K562 (cell line): ENCODE measurements at regions of chr4 and their contacts with region 1.

Region 1: GRCh38 chr4:55345980-55346850 is at the start of gene SRD5A3:
- DNase-seq: peak; percentile 89 to 93 (median 90)
- ATAC-seq: peak; percentile 94
- H3K4me3 ChIP-seq: peak within 1 kb of the TSS; percentile 62
- H3K27ac ChIP-seq: peak within 1 kb of the TSS; percentile 96
- H3K4me1 ChIP-seq: peaks cover 12 to 15% of the 10 kb centered on the region in 2 experiments
- H3K27me3 ChIP-seq: no peaks in the 10 kb centered on the region
- CTCF ChIP-seq: peak; percentile 81 to 91 (median 83)
- EP300 ChIP-seq: no peak; the same call in 1 of the 2 replicates
- POLR2A ChIP-seq: peak; percentile 88
- RAD21 ChIP-seq: peak; percentile 71 to 73
- polyA plus RNA-seq, gene SRD5A3: 2.5 to 5.3 TPM

Region 2: DNA sequence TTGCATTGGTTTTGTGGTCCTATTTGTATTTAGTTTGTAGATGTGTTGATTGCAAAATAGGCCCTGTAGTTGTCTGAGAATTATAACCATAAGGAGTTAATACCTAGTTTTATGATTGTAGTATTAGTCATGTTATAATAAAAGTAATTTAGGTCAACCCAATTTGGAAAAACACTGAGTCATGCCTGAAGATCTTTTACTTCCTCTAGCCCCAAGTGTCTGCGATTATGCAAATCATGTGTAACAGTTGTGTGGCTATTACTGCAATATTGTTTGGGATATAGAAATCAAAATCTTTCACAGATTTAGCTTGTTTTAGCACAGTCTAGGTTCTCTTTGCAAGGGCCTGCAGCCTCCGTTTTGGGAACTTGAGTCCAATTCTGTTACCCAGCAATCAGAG is 12.5 kb after region 1 on chr4:
- CTCF ChIA-PET with region 1: no interaction called
- POLR2A ChIA-PET with region 1: interaction called, 11 read pairs
- in situ Hi-C with region 1: no loop called
- intact Hi-C with region 1: no loop called
- DNase-seq: peak in 2 of 4 experiments; percentile 41 to 44
- ATAC-seq: peak; percentile 31
- H3K4me3 ChIP-seq: no peak overlapping the region
- H3K27ac ChIP-seq: peak overlapping the region; percentile 17; the same call in 1 of the 3 replicates
- H3K4me1 ChIP-seq: peaks cover 4 to 18% of the 10 kb centered on the region in 2 experiments; a peak in 4 of 5 replicates
- H3K27me3 ChIP-seq: no peaks in the 10 kb centered on the region
- CTCF ChIP-seq: no peak
- EP300 ChIP-seq: peak; percentile 41; the same call in 1 of the 2 replicates
- POLR2A ChIP-seq: no peak
- RAD21 ChIP-seq: no peak

Region 3: DNA sequence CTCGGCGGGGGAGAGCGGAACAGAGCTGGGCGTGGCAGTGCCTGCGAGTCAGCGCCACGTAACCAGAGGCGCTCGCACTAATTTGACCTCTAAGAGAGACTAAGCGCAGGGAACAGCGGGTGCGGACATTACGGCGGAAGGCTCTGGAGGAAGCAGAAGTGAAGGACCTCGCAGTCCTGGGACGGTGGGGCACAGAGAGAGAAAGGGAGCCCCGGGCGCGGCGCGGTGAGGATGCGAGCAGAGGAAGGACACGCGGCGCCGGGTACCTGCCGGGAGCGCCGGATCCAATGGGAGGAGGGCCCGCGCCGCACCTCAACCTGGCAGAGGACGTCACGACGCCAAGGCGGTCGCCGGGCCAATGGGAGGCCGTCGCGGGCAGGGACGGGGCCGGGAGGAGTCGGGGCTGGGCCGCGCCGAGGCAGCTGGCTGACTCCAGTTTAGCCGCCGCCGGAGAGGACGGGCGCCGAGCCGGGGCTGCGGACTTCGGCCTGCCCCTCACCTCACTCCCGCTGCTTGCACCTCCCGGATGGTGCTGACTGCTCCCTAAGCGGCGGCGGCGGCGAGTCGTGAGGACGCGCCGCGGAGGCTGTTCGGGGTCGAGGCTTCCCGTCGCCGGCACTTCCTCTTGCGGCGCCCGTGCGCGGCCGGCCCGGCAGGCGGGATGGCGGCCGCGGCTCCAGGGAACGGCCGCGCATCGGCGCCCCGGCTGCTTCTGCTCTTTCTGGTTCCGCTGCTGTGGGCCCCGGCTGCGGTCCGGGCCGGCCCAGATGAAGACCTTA is 49.5 kb after region 1 on chr4 and contains the start of gene TMEM165:
- CTCF ChIA-PET with region 1: no interaction called
- POLR2A ChIA-PET with region 1: interaction called, 8 read pairs
- in situ Hi-C with region 1: no loop called
- intact Hi-C with region 1: loop called (anchors 1 kb)
- DNase-seq: peak; percentile 94 to 96 (median 96)
- ATAC-seq: peak; percentile 92
- H3K4me3 ChIP-seq: peak within 1 kb of the TSS; percentile 97
- H3K27ac ChIP-seq: peak within 1 kb of the TSS; percentile 90
- H3K4me1 ChIP-seq: peaks cover 16 to 26% of the 10 kb centered on the region in 2 experiments; a peak in 4 of 5 replicates
- H3K27me3 ChIP-seq: no peaks in the 10 kb centered on the region
- CTCF ChIP-seq: 0 out of 6 replicates have a peak, but pooled peaks of 1 of the 3 experiments have one; percentile 4
- EP300 ChIP-seq: no peak
- POLR2A ChIP-seq: peak; percentile 91
- RAD21 ChIP-seq: no peak
- polyA plus RNA-seq, gene TMEM165: 21.3 to 27.5 TPM

Region 4: GRCh38 chr4:55431710-55432336 is 85.6 kb after region 1 on chr4:
- CTCF ChIA-PET with region 1: no interaction called
- POLR2A ChIA-PET with region 1: no interaction called
- in situ Hi-C with region 1: no loop called
- intact Hi-C with region 1: no loop called
- DNase-seq: no peak
- ATAC-seq: no peak
- H3K4me3 ChIP-seq: no peak overlapping the region
- H3K27ac ChIP-seq: no peak overlapping the region
- H3K4me1 ChIP-seq: peaks cover 0 to under 1% of the 10 kb centered on the region in 2 experiments; a peak in 3 of 5 replicates
- H3K27me3 ChIP-seq: no peaks in the 10 kb centered on the region
- CTCF ChIP-seq: no peak
- EP300 ChIP-seq: no peak
- POLR2A ChIP-seq: no peak
- RAD21 ChIP-seq: no peak

Region 5: GRCh38 chr4:55546756-55547465 is 200.7 kb after region 1 on chr4 and contains the start of gene CLOCK:
- CTCF ChIA-PET with region 1: interaction called, 4 read pairs
- POLR2A ChIA-PET with region 1: no interaction called
- in situ Hi-C with region 1: loop called (anchors 10 kb)
- intact Hi-C with region 1: loop called (anchors 5 kb)
- DNase-seq: peak; percentile 89 to 91 (median 90)
- ATAC-seq: peak; percentile 81
- H3K4me3 ChIP-seq: peak within 1 kb of the TSS; percentile 50
- H3K27ac ChIP-seq: peak within 1 kb of the TSS; percentile 91
- H3K4me1 ChIP-seq: peaks cover 9 to 27% of the 10 kb centered on the region in 2 experiments; a peak in 4 of 5 replicates
- H3K27me3 ChIP-seq: no peaks in the 10 kb centered on the region
- CTCF ChIP-seq: peak; percentile 52 to 65 (median 54); a peak in 5 of 6 replicates
- EP300 ChIP-seq: no peak
- POLR2A ChIP-seq: peak; percentile 72
- RAD21 ChIP-seq: no peak; a peak in 2 of 4 replicates
- polyA plus RNA-seq, gene CLOCK: 3.7 to 4.5 TPM

Region 6: GRCh38 chr4:55768291-55768690 is 422.1 kb after region 1 on chr4:
- CTCF ChIA-PET with region 1: no interaction called
- POLR2A ChIA-PET with region 1: no interaction called
- in situ Hi-C with region 1: no loop called
- intact Hi-C with region 1: no loop called
- DNase-seq: peak in 2 of 4 experiments; percentile 17 to 23
- ATAC-seq: peak; percentile 70
- H3K4me3 ChIP-seq: no peak overlapping the region
- H3K27ac ChIP-seq: no peak overlapping the region
- H3K4me1 ChIP-seq: no peaks in the 10 kb centered on the region
- H3K27me3 ChIP-seq: no peaks in the 10 kb centered on the region
- CTCF ChIP-seq: no peak
- EP300 ChIP-seq: no peak
- POLR2A ChIP-seq: no peak
- RAD21 ChIP-seq: no peak

Region 7: DNA sequence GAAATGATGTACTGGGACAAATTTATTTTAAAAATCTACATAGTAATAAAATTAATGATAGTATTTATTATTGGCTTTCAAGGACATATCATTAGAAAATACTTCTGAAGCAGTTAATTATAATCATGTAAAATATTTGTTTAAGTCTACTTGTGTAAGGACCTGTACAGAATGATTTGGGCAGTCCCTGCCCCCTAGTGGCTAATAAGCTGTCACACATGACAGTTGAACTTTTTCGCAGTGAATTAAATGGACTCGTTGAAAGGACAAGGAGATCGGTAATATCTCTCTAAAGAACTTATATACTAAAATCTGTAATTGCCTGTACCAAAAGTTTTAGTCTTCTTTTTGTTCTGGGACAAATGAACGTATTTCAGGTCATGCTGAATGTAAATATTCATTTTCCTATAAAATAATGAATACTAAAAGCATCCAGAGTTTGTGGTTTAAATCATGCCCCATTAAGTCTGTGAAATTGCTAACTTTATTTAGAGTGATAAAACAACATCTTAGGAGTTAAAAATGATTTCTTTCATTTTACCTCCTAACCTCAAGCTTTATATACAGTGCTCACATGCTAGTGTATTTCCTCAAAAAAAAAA is 520.9 kb after region 1 on chr4:
- CTCF ChIA-PET with region 1: no interaction called
- POLR2A ChIA-PET with region 1: no interaction called
- in situ Hi-C with region 1: no loop called
- intact Hi-C with region 1: loop called (anchors 10 kb)
- DNase-seq: peak; percentile 35 to 75 (median 42)
- ATAC-seq: peak; percentile 97
- H3K4me3 ChIP-seq: no peak overlapping the region
- H3K27ac ChIP-seq: peak overlapping the region; percentile 64; the same call in 2 of the 3 replicates
- H3K4me1 ChIP-seq: peaks cover 0 to 10% of the 10 kb centered on the region in 2 experiments; a peak in 2 of 5 replicates
- H3K27me3 ChIP-seq: no peaks in the 10 kb centered on the region
- CTCF ChIP-seq: peak; percentile 65 to 89 (median 77)
- EP300 ChIP-seq: no peak
- POLR2A ChIP-seq: no peak
- RAD21 ChIP-seq: peak; percentile 77 to 80